Activated CD4-positive, alpha-beta T cell treated with anti-CD3 and anti-CD28 coated beads for 36 hours (primary cell): ENCODE measurements at regions of chr10 and their contacts with region 1.

Region 1: GRCh38 chr10:78302989-78303854 is 269.6 kb downstream of the RPS24 start:
- DNase-seq: peak; percentile 98
- ATAC-seq: peak; percentile 94
- H3K4me3 Mint-ChIP-seq: peak overlapping the region; percentile 79
- H3K27ac Mint-ChIP-seq: peak overlapping the region; percentile 90
- H3K4me1 Mint-ChIP-seq: peaks cover 12% of the 10 kb centered on the region
- H3K27me3 Mint-ChIP-seq: no peaks in the 10 kb centered on the region

Region 2: GRCh38 chr10:77458986-77459590 is 844.1 kb before region 1 on chr10:
- CTCF ChIA-PET with region 1: no interaction called
- POLR2A ChIA-PET with region 1: no interaction called
- intact Hi-C with region 1: no loop called
- DNase-seq: no peak
- ATAC-seq: no peak
- H3K4me3 Mint-ChIP-seq: no peak overlapping the region
- H3K27ac Mint-ChIP-seq: no peak overlapping the region
- H3K4me1 Mint-ChIP-seq: no peaks in the 10 kb centered on the region
- H3K27me3 Mint-ChIP-seq: peaks cover 5% of the 10 kb centered on the region

Region 3: DNA sequence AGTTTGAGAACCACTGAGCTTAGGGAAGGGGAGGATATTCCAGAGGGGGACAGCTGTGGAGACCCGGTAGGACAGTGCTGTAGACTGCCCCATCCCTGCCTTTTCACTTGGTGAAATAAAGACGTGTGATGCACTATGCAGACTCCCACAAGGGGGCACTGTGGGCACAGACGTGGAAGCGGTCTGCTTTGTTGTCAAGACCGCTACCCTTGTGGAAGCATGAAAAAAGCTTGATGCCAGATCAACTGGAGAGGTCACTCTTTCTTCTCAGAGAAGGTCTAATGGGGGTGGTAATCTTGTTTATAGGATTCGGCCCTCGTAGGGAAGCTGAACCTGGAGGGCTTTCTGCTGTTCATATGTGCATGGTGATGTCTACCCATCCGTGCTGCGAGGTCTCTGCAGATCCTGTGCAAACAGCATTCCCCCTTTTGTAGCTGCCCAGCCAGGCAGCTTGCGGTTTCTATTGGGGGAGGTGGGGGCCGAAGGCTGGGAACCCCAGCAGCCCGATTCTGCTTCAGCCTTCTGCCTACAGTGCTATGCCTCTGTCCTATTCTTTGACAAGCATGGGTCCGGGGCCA is 255.8 kb before region 1 on chr10:
- CTCF ChIA-PET with region 1: interaction called, 4 read pairs
- POLR2A ChIA-PET with region 1: interaction called, 3 read pairs
- intact Hi-C with region 1: loop called in 1 of 2 experiments (anchors 2 kb)
- DNase-seq: peak; percentile 91
- ATAC-seq: peak; percentile 81
- H3K4me3 Mint-ChIP-seq: no peak overlapping the region
- H3K27ac Mint-ChIP-seq: no peak overlapping the region
- H3K4me1 Mint-ChIP-seq: peaks cover 23% of the 10 kb centered on the region
- H3K27me3 Mint-ChIP-seq: no peaks in the 10 kb centered on the region

Region 4: GRCh38 chr10:78348411-78349166 is 45.4 kb after region 1 on chr10:
- CTCF ChIA-PET with region 1: no interaction called
- POLR2A ChIA-PET with region 1: no interaction called
- intact Hi-C with region 1: no loop called
- DNase-seq: no peak
- ATAC-seq: no peak
- H3K4me3 Mint-ChIP-seq: no peak overlapping the region
- H3K27ac Mint-ChIP-seq: no peak overlapping the region
- H3K4me1 Mint-ChIP-seq: no peaks in the 10 kb centered on the region
- H3K27me3 Mint-ChIP-seq: peaks cover 4% of the 10 kb centered on the region

Region 5: DNA sequence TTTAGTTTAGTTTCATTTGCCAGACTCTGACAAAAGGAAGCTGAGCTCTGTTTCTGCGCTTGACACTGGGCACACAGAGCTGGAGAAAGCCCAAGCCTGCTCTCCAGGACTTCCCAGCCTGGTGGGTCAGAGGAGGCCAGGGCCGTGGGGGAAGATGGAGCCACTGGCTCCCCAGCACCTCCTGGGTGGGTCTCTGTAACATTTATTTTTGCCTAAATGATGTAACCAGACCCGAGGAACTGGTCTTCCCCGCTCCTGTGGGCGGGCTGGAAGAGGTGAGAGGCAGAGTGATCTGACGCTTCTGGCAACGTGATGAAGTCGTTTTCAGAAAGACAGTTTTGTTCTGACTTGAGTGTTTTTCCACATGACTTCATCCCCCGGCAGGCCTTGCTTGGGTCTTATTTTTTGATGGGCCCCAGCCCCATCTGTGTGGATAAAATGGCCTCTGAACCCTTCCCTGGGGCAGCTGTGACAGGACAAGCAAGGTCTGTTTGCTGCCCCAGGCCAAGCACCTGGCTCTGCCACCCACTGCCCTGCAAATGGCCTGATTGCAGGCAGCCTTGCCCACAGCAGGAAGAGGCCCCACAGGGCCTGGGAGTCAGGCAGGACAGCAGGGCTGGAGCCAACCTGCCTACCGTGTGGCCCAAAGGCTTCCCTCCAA is 460.6 kb after region 1 on chr10:
- CTCF ChIA-PET with region 1: no interaction called
- POLR2A ChIA-PET with region 1: no interaction called
- intact Hi-C with region 1: loop called in 1 of 2 experiments (anchors 1 kb)
- DNase-seq: peak; percentile 85
- ATAC-seq: peak; percentile 88
- H3K4me3 Mint-ChIP-seq: no peak overlapping the region
- H3K27ac Mint-ChIP-seq: peak overlapping the region; percentile 91
- H3K4me1 Mint-ChIP-seq: peaks cover 21% of the 10 kb centered on the region
- H3K27me3 Mint-ChIP-seq: no peaks in the 10 kb centered on the region

Region 6: GRCh38 chr10:79068562-79069324 is 765.5 kb after region 1 on chr10 and contains the start of gene ZMIZ1:
- CTCF ChIA-PET with region 1: interaction called, 3 read pairs
- POLR2A ChIA-PET with region 1: no interaction called
- intact Hi-C with region 1: loop called (anchors 1 to 10 kb)
- DNase-seq: peak; percentile 89
- ATAC-seq: peak; percentile 72
- H3K4me3 Mint-ChIP-seq: peak within 1 kb of the TSS; percentile 73
- H3K27ac Mint-ChIP-seq: peak within 1 kb of the TSS; percentile 58
- H3K4me1 Mint-ChIP-seq: peaks cover 32% of the 10 kb centered on the region
- H3K27me3 Mint-ChIP-seq: peaks cover 3% of the 10 kb centered on the region
- total RNA-seq, gene ZMIZ1: 33.9 to 34.3 TPM

Region 7: DNA sequence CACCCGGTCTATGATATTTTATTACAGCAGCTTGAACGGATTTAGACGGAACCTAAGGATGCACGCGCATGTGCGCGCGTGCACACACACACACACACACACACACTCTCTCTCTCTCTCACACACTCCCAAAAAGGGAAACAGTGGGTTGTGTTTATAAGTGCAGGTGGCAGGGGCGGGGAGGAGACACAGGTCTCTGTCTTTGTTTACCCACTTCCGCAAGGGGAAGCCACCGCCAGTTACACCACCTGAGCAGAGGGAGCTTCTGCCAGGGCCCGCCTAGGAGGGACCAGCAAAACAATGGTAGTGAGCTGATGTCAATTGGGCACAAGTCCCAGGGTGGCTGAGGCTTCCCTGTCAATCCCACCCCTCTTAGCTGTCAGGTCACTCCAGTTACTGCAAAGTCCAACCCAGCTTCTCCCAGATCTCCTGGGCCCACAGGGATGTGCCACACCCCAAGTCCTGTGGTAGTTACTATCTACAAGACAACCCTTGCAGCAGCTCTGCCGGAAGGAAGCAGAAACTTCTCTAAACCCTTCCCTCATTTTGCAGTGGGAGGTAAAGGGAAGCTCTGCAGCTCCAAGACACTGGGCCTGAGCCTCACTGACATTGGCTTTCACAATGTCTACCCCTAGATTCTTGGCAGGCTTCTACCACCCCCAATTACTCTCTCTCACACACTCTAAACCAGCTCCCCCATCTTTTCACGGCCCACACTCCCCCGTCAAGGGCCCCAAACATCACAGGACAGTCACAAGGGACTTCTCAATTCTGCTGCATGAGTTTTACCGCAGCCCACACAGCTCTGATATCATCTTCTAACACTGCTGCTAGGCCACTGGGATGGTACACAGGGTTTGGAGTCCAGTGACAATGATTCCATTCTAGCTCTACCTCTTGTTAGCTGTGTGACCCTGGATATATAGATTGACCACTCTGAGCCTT is 1884.5 kb after region 1 on chr10:
- CTCF ChIA-PET with region 1: no interaction called
- POLR2A ChIA-PET with region 1: no interaction called
- intact Hi-C with region 1: loop called in 1 of 2 experiments (anchors 5 kb)
- DNase-seq: peak; percentile 88
- ATAC-seq: peak; percentile 80
- H3K4me3 Mint-ChIP-seq: peak overlapping the region; percentile 60
- H3K27ac Mint-ChIP-seq: peak overlapping the region; percentile 91
- H3K4me1 Mint-ChIP-seq: peaks cover 85% of the 10 kb centered on the region
- H3K27me3 Mint-ChIP-seq: no peaks in the 10 kb centered on the region